H1 (cell line): ENCODE measurements at regions of chr1 and their contacts with region 1.

Region 1: GRCh38 chr1:155001675-155002463 is 733 bp upstream of the ZBTB7B start:
- DNase-seq: peak; percentile 97 to 99
- H3K4me3 ChIP-seq: peak overlapping the region; percentile 62 to 87 (median 70)
- H3K27ac ChIP-seq: no peak overlapping the region; the same call in 1 of the 2 replicates
- H3K4me1 ChIP-seq: peaks cover 6 to 18% (median 14%) of the 10 kb centered on the region in 4 experiments
- H3K27me3 ChIP-seq: no peaks in the 10 kb centered on the region
- CTCF ChIP-seq: peak in 2 of 3 experiments; percentile 20 to 29; a peak in 2 of 4 replicates
- EP300 ChIP-seq: no peak; a peak in 1 of 3 replicates
- POLR2A ChIP-seq: no peak
- RAD21 ChIP-seq: peak; percentile 0 to 42; a peak in 3 of 4 replicates

Region 2: GRCh38 chr1:154859786-154860155 is 142.1 kb before region 1 on chr1:
- CTCF ChIA-PET with region 1: no interaction called
- POLR2A ChIA-PET with region 1: no interaction called
- DNase-seq: no peak
- H3K4me3 ChIP-seq: no peak overlapping the region
- H3K27ac ChIP-seq: no peak overlapping the region
- H3K4me1 ChIP-seq: peaks cover 0 to 7% (median 4%) of the 10 kb centered on the region in 4 experiments; a peak in 4 of 7 replicates
- H3K27me3 ChIP-seq: no peaks in the 10 kb centered on the region; a peak in 1 of 7 replicates
- CTCF ChIP-seq: no peak
- EP300 ChIP-seq: no peak
- POLR2A ChIP-seq: no peak
- RAD21 ChIP-seq: no peak

Region 3: GRCh38 chr1:154911691-154912550 is 89.9 kb before region 1 on chr1:
- CTCF ChIA-PET with region 1: interaction called, 10 read pairs
- POLR2A ChIA-PET with region 1: no interaction called
- DNase-seq: no peak
- H3K4me3 ChIP-seq: no peak overlapping the region
- H3K27ac ChIP-seq: no peak overlapping the region
- H3K4me1 ChIP-seq: no peaks in the 10 kb centered on the region
- H3K27me3 ChIP-seq: no peaks in the 10 kb centered on the region
- CTCF ChIP-seq: no peak
- EP300 ChIP-seq: no peak
- POLR2A ChIP-seq: no peak
- RAD21 ChIP-seq: no peak

Region 4: GRCh38 chr1:154961497-154962262 is 40.2 kb before region 1 on chr1 and contains the start of gene PYGO2:
- CTCF ChIA-PET with region 1: interaction called, 132 read pairs
- POLR2A ChIA-PET with region 1: interaction called, 662 read pairs
- DNase-seq: peak in 1 of 2 experiments; percentile 91
- H3K4me3 ChIP-seq: peak within 1 kb of the TSS; percentile 50 to 84 (median 54)
- H3K27ac ChIP-seq: peak within 1 kb of the TSS; percentile 99
- H3K4me1 ChIP-seq: peaks cover 2 to 9% (median 5%) of the 10 kb centered on the region in 4 experiments
- H3K27me3 ChIP-seq: no peaks in the 10 kb centered on the region; a peak in 1 of 7 replicates
- CTCF ChIP-seq: peak; percentile 37 to 55 (median 53)
- EP300 ChIP-seq: peak in 1 of 2 experiments; percentile 77; a peak in 1 of 3 replicates
- POLR2A ChIP-seq: peak; percentile 85 to 90
- RAD21 ChIP-seq: peak; percentile 5 to 53; a peak in 1 of 4 replicates
- total RNA-seq, gene PYGO2: 31.6 and 32.4 TPM in 2 replicates

Region 5: DNA sequence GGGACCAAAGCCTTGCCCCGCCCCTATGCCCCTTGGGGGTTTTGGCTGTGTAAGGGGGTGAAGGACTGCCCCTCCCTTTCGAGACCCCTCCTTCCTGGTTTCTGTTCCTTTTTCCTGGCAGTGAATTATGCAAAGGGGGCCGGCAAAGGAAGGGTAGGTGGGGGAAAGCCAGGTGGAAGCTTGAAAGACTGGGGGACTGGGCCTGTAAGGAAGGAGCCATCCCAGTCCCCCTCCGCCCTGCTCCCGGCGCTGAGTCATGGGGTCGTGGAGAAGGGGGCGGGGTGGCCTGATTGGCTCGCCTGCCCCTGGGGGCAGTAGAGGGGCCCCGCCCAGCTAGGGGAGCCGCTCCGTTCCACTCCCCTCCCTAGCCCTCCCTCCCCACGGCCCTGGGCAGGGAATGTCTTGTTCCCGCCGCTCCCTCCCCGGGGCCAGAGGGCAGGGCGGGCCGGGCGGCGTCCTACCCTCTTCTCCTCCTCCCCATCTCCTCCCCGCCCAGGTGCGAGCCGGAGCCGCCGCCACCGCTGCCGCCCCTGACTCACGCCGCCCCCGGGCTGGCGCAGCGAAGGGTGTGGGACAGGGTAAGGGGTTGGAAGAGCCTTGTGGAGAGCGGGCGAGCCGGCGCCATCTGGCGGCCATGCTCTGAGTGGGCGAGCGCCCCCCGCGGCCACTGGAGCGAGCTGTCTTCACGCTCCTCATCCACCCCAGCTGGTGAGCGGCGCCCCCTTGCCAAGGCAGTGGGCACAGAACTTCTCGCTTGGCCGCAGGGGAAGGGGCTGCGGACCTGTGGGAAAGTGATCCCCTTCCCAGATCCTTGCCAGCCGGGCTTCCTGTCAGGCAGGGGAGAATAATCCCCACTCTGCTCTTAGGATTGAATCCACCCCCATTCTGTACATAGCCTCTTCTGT is 15.4 kb after region 1 on chr1:
- CTCF ChIA-PET with region 1: interaction called, 258 read pairs
- POLR2A ChIA-PET with region 1: interaction called, 128 read pairs
- DNase-seq: peak; percentile 89 to 92
- H3K4me3 ChIP-seq: peak overlapping the region; percentile 21 to 60 (median 39); a peak in 7 of 8 replicates
- H3K27ac ChIP-seq: peak overlapping the region; percentile 71; the same call in 1 of the 2 replicates
- H3K4me1 ChIP-seq: peaks cover 8 to 23% (median 16%) of the 10 kb centered on the region in 4 experiments
- H3K27me3 ChIP-seq: peaks cover 0 to 2% (median 0%) of the 10 kb centered on the region in 4 experiments; a peak in 1 of 7 replicates
- CTCF ChIP-seq: peak in 2 of 3 experiments; percentile 99 to 100; a peak in 3 of 4 replicates
- EP300 ChIP-seq: peak in 1 of 2 experiments; percentile 78; a peak in 2 of 3 replicates
- POLR2A ChIP-seq: peak in 1 of 2 experiments; percentile 20; a peak in 1 of 3 replicates
- RAD21 ChIP-seq: peak; percentile 65 to 72

Region 6: DNA sequence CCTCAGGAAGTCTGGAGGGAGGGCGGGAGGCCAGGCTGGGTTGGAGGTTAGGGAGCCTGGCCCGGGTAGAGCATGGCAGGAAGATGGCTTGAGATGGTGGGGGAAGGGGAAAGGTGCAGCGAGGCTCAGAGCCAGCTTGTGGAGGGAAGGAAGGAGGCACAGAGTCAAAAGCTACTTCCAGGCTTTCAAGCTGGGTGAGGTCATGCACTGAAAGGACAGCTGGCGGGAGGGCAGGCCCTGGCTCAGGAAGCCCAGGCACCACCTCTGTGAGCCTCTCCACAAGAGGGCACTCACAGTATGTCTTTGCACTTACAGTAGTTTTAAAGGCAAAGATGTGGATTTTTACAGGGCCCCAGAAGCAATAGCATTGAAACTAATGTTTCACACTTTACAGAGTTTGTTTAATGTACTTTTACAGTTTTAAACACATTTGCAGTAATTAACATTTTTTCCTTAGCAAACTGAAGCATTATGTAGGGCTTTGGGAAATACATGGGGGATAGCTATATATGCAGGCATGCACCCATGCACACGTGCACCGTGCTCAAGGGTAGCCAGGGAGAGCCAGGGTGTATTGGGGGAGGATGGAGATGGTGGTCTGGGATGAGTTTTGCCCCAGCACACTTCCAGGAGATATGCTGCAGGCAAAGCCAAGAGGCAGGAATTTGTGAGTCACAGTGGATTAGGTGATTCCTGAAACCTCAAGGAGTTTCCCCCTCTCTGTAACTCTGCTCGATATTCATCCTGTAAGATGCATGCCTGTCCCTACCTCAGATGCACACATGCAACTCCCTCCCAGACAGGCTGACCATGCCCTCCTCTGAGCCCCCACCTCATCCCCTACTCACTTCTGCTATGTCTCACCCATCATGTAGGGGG is 43.2 kb after region 1 on chr1:
- CTCF ChIA-PET with region 1: interaction called, 354 read pairs
- POLR2A ChIA-PET with region 1: interaction called, 4 read pairs
- DNase-seq: peak; percentile 67 to 73
- H3K4me3 ChIP-seq: no peak overlapping the region
- H3K27ac ChIP-seq: no peak overlapping the region
- H3K4me1 ChIP-seq: peaks cover 4 to 15% (median 5%) of the 10 kb centered on the region in 4 experiments; a peak in 6 of 7 replicates
- H3K27me3 ChIP-seq: no peaks in the 10 kb centered on the region; a peak in 2 of 7 replicates
- CTCF ChIP-seq: peak; percentile 76 to 86 (median 79)
- EP300 ChIP-seq: no peak
- POLR2A ChIP-seq: no peak
- RAD21 ChIP-seq: peak; percentile 70 to 76